Activated T-helper 1 cell treated with anti-CD3 and anti-CD28 coated beads, Interleukin-12 subunit alpha, Interleukin-12 subunit beta, Interleukin-2, Interleukin-4 antibody, amounts not matched to agents 30 ng/mL and 10 ng/mL and 1 ng/mL, durations not matched to agents 14 hours and 24 hours and 36 hours (primary cell): ENCODE measurements at regions of chr1 and their contacts with region 1.

Region 1: DNA sequence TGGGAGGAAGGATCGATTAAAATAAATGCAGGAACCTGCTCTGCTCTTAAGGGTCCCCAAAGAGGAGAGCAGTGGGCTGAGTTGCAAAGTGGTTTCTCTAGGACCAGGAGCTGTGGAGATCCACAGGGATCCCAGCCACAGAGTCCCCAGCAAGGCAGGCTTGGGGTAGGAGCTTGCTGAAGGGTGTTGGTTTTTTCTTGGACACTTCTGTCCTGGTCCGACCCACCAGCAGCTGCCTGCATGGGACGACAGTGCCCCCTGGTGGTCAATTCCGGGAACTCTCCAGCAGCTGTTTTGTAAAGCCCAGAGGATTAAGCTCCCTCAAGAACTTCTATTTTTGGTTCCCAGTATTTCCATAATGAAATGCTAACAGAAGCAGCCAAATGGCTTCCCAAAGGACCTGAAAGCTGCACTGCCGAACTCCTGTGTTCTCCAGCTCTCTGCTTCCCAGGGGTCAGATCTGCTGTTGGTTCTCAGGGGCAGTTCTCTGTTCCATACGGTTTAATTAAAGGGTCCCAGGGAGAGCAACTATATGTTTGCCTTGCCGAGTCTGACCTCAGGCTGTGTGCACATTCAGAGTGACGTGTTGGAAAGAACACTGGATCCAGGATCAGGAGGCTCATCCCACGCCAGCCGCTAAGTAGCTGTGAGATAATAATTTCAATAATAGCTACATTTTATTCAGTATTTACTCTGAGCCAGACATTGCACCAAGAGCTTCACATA is 23.2 kb downstream of the NENF start:
- DNase-seq: peak; percentile 73
- H3K4me3 Mint-ChIP-seq: no peak overlapping the region
- H3K27ac Mint-ChIP-seq: no peak overlapping the region
- H3K4me1 Mint-ChIP-seq: peaks cover 12% of the 10 kb centered on the region
- H3K27me3 Mint-ChIP-seq: peaks cover 1% of the 10 kb centered on the region

Region 2: DNA sequence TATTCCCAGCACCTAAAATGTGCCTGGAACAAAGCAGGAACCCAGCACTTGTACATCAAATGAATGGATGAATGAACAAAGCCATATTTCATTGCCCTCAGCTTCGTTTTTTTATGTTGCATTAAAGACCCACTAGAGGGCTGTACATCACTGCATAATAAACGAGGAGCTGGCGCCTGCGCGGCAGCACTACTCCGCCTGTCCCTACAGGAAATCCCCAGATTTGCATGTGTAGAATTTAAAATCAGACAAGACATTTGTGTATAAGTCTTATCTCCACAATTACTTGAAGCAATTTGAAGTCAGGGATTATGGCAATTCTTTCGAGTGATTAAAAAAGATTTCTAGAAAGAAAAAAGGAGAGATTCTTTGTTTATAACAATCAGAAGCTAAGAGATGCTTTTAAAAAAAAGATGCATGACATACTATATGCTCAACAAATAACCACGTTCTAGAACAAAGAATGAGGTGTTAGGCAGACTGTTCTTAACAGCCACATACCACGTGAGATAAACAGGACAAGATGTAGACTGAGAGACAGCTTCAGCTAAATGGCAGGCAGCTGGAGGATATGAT is 775.1 kb before region 1 on chr1:
- intact Hi-C with region 1: loop called (anchors 1 kb)
- DNase-seq: peak; percentile 64
- H3K4me3 Mint-ChIP-seq: no peak overlapping the region
- H3K27ac Mint-ChIP-seq: peak overlapping the region; percentile 86
- H3K4me1 Mint-ChIP-seq: peaks cover 14% of the 10 kb centered on the region
- H3K27me3 Mint-ChIP-seq: no peaks in the 10 kb centered on the region

Region 3: DNA sequence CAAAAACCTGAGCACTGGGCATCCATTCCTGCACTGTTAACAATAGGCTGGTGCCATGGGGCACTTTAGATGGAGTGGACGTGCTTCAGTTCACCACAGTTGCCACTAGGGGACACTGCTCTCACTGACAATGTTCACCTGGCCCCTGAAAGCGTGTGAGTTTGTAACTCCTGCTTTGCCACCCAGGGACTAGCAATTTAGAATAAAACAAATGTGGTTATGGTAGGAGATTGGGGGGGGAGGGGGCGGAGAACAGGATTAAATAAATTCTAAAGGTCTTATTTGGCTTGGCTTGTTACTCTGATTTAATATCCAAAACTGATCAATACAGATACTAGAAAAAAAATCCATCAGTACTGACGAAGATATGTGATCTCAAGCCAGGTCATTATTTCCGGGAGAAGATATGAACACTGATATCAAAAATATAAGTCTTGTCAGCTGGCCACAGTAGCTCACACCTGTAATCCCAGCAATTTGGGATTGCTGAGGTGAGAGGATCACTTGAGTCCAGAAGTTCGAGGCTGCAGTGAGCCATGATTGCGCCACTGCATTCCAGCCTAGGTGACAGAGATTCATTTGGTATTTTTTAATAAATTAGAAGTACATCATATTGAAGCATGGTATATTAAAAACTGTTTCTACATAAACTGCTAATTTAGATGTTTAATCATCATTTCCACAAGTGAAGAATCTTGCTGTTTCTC is 443.8 kb before region 1 on chr1:
- intact Hi-C with region 1: loop called (anchors 1 kb)
- DNase-seq: peak; percentile 45
- H3K4me3 Mint-ChIP-seq: no peak overlapping the region
- H3K27ac Mint-ChIP-seq: no peak overlapping the region
- H3K4me1 Mint-ChIP-seq: peaks cover 5% of the 10 kb centered on the region
- H3K27me3 Mint-ChIP-seq: no peaks in the 10 kb centered on the region

Region 4: DNA sequence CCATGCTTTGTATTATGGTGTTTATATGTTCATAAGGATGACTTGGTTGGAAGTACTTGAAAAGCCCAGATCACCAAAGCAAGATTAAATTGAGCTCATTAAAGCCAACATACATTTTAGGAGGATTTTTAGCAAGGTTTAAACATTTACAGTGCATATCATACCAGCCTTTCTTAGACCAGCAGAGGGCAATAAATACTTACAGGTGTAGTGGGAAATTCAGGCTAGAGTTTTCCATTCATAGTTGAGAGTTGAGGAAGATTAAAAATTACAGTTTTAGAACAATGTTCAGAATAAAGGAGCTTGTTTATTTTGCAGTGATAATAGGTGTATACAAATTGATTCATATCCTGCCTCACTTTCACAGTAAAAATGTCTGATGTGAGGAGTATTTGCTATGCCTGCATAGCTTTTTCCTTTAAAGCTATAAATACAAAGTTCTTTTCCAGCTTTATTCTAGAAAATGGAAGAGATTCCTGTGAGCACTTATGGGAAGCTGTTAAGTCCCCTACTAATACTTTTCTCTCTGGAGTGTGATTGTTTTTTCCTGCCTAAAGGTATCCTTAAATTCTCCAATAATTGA is 385.2 kb before region 1 on chr1:
- intact Hi-C with region 1: loop called (anchors 1 kb)
- DNase-seq: no peak
- H3K4me3 Mint-ChIP-seq: no peak overlapping the region
- H3K27ac Mint-ChIP-seq: no peak overlapping the region
- H3K4me1 Mint-ChIP-seq: peaks cover 6% of the 10 kb centered on the region
- H3K27me3 Mint-ChIP-seq: no peaks in the 10 kb centered on the region

Region 5: DNA sequence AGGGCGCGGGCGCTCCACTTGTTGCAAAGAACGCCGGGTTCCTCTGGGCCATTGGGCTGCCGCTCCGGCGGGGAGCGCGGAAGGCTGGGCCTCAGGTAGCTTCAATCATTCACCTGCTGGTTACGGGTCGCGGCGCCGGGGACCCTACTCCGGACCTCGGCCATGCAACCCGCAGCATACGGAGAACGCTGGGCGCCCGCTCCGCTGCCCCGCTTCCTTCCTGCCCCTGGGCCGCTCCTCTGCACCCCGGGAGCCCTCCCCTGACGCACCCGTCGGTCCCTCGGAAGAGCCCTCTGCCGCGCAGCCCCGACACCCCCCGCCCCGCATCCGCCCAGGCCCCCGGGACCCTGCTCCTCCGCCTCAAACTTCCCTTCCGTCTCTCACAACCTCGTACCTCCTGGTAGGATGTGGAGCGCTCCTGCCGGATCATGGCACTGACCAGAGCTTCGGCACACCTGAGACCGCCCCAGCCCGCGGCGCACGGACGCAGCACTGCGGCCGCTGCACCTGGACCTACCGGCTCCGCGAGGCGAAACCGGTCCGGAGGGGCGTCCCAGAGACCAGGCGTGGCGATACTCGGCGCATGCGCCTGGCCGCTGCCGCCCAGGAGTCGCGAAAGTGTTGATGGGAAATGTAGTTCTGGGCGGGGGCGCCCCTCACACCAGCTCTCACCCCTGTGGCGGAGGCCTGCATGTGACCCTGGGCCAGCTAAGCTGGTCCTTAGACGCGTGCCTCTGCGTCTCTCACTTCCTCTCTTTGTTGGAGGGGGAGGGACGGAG is 41.4 kb before region 1 on chr1 and contains the start of gene PACC1:
- intact Hi-C with region 1: loop called (anchors 2 kb)
- DNase-seq: peak; percentile 88
- H3K4me3 Mint-ChIP-seq: peak within 1 kb of the TSS; percentile 100
- H3K27ac Mint-ChIP-seq: peak within 1 kb of the TSS; percentile 97
- H3K4me1 Mint-ChIP-seq: peaks cover 21% of the 10 kb centered on the region
- H3K27me3 Mint-ChIP-seq: peaks cover 6% of the 10 kb centered on the region
- total RNA-seq, gene PACC1: 17.6 and 19.8 TPM in 2 replicates

Region 6: DNA sequence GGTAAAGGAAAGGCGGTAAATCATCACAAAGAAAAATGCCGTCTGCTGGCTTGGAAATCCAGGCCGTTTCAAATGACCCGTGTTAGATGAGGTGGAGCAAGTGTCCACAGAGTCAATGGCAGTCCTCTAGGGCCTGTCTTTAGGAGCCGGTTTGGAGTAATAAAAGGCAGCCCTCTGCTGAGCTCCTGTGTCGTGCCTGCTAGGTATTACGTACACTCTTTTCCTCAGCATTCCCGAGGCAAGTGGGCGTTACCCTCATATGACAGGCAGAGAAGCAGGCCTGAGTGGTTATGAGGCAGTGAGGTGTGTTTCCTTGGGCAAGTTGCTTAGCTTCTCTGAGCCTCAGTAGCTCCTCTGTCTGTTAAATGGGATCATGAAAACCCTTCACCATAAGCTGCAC is 15.5 kb before region 1 on chr1:
- intact Hi-C with region 1: no loop called
- DNase-seq: no peak
- H3K4me3 Mint-ChIP-seq: no peak overlapping the region
- H3K27ac Mint-ChIP-seq: no peak overlapping the region
- H3K4me1 Mint-ChIP-seq: peaks cover 11% of the 10 kb centered on the region
- H3K27me3 Mint-ChIP-seq: no peaks in the 10 kb centered on the region

Region 7: GRCh38 chr1:212782422-212783154 is 326.6 kb after region 1 on chr1:
- intact Hi-C with region 1: loop called (anchors 5 kb)
- DNase-seq: no peak
- H3K4me3 Mint-ChIP-seq: no peak overlapping the region
- H3K27ac Mint-ChIP-seq: no peak overlapping the region
- H3K4me1 Mint-ChIP-seq: peaks cover 4% of the 10 kb centered on the region
- H3K27me3 Mint-ChIP-seq: no peaks in the 10 kb centered on the region